ENCODE measurements at regions of chr11 and their contacts with region 1.

Region 1: DNA sequence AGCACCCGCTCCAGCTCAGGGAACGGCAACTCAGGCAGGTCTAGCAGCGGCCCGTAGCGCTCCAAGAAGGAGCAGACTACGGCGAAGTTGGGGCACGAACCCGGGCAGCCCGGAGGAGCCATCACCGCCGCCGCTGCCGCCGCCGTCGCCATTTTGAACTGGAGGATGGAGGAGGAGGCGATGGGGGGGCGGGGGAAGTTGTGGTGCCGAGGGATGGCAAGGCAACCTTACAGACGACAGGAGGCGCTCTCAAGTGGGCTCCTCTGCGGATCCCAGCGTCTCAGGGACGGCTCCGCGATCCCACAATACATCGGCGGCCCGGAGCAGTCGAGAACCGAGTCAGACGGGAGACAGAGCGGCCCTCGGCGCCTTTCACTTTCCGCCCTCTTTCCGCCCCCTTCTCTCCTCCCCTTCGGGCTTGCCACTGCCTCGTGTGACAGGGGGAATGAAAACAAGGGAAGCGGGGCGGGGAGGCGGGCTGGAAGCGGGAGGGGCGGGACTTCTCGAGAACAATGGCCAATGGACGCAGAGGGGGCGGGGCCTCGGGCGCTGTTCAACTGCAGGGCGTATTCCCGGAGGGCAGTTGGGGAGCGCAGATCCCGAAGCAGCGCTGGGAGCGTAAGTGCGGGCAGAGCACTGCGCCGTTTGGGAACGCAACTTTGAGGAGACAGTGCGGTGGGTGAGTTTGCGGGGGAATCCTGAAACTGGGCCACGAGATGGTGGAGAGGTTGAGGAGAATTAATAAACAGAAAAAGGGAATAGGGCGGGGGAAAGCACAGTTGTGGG is at the starts of genes AAMDC and RSF1:
- DNase-seq: peak; percentile 99
- H3K4me3 ChIP-seq: peak within 1 kb of the TSS; percentile 95 to 99
- H3K27ac ChIP-seq: peak within 1 kb of the TSS; percentile 96 to 97
- H3K4me1 ChIP-seq: peaks cover 5% of the 10 kb centered on the region
- H3K27me3 ChIP-seq: no peaks in the 10 kb centered on the region
- CTCF ChIP-seq: peak; percentile 36 to 80 (median 72)
- POLR2A ChIP-seq: peak; percentile 97
- total RNA-seq, gene AAMDC: 27.0 to 27.5 TPM
- total RNA-seq, gene RSF1: 25.5 to 46.2 TPM

Region 2: DNA sequence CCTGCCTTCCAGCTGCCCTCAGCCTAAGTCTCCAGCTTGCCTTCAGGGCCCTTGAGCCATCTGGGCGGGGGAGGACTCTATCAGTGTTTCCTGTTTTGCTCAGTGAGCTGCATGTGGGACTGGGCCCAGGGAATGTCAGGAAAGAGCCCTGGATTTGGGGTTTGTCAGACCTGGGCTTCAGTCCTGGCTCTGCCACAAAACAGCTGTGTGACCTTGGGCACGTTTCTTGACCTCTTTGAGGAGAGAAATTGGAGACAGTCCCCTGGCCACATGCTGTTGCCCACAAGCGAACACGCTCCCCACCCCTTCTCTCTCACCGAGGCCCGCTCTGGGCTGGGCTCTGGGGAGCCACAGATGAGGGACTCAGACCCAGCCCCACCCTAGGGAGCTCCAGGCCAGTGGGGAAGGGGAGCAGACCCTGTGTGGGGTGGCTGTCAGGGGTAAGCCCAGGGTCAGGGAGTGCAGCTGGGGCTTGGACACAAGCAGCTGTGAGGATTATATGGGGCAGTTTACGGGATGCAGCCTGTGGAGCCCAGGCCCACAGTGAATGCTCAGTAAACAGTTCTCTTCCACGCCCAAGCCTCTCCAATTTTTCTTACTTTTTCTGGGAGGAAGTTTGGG is 680.4 kb before region 1 on chr11:
- intact Hi-C with region 1: no loop called
- DNase-seq: no peak
- H3K4me3 ChIP-seq: no peak overlapping the region
- H3K27ac ChIP-seq: no peak overlapping the region
- H3K4me1 ChIP-seq: no peaks in the 10 kb centered on the region
- H3K27me3 ChIP-seq: peaks cover 4% of the 10 kb centered on the region
- CTCF ChIP-seq: no peak
- POLR2A ChIP-seq: no peak

Region 3: DNA sequence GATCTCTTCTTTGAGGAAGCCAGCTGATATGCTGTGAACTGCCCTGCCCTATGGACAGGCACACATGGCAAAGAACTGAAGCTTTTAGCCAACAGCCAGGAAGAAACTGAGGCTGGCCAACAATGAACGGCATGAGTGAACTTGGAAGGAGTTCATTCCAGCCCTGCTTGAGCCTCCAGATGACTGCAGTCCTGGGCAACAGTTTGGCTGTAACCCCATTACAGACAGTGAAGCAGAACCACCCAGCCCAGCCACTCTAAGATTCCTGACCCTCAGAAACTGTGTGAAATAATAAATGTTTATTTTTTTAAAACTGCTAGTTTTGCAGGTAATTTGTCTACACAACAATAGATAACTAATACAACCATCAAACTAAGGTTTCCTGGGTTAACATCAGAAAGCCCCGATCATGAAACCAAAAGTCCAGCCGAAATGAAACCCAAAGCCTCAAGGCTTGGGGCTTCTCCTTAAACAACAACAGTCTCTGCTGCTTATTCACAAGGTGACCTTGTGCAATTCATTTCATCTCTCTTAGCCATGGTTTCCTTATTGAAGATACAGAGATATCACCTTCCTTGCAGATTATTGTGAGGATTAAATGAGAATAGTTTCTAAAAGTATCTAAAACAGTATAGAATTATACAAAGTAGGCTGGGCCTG is 378.2 kb before region 1 on chr11:
- intact Hi-C with region 1: no loop called
- DNase-seq: no peak
- H3K4me3 ChIP-seq: no peak overlapping the region
- H3K27ac ChIP-seq: no peak overlapping the region
- H3K4me1 ChIP-seq: no peaks in the 10 kb centered on the region
- H3K27me3 ChIP-seq: no peaks in the 10 kb centered on the region
- CTCF ChIP-seq: no peak
- POLR2A ChIP-seq: no peak

Region 4: GRCh38 chr11:77710358-77710757 is 110.4 kb before region 1 on chr11:
- intact Hi-C with region 1: no loop called
- DNase-seq: no peak
- H3K4me3 ChIP-seq: no peak overlapping the region
- H3K27ac ChIP-seq: no peak overlapping the region
- H3K4me1 ChIP-seq: no peaks in the 10 kb centered on the region
- H3K27me3 ChIP-seq: no peaks in the 10 kb centered on the region
- CTCF ChIP-seq: no peak
- POLR2A ChIP-seq: no peak

Region 5: GRCh38 chr11:77994412-77995362 is 173.9 kb after region 1 on chr11 and contains the start of gene INTS4:
- intact Hi-C with region 1: loop called (anchors 1 kb)
- DNase-seq: peak; percentile 99
- H3K4me3 ChIP-seq: peak within 1 kb of the TSS; percentile 47 to 55
- H3K27ac ChIP-seq: peak within 1 kb of the TSS; percentile 68 to 70
- H3K4me1 ChIP-seq: peaks cover 7% of the 10 kb centered on the region
- H3K27me3 ChIP-seq: no peaks in the 10 kb centered on the region
- CTCF ChIP-seq: peak in 1 of 4 experiments; percentile 11
- POLR2A ChIP-seq: peak; percentile 30
- total RNA-seq, gene INTS4: 30.1 to 31.0 TPM

Region 6: GRCh38 chr11:78045851-78046485 is 225.2 kb after region 1 on chr11:
- intact Hi-C with region 1: loop called (anchors 5 kb)
- DNase-seq: peak; percentile 70
- H3K4me3 ChIP-seq: peak overlapping the region; percentile 28 to 30
- H3K27ac ChIP-seq: peak overlapping the region; percentile 21 to 64
- H3K4me1 ChIP-seq: no peaks in the 10 kb centered on the region
- H3K27me3 ChIP-seq: no peaks in the 10 kb centered on the region
- CTCF ChIP-seq: peak; percentile 89 to 97 (median 96)
- POLR2A ChIP-seq: no peak

Region 7: GRCh38 chr11:78057462-78058055 is 236.8 kb after region 1 on chr11:
- intact Hi-C with region 1: no loop called
- DNase-seq: no peak
- H3K4me3 ChIP-seq: no peak overlapping the region
- H3K27ac ChIP-seq: no peak overlapping the region
- H3K4me1 ChIP-seq: no peaks in the 10 kb centered on the region
- H3K27me3 ChIP-seq: no peaks in the 10 kb centered on the region
- CTCF ChIP-seq: no peak
- POLR2A ChIP-seq: no peak

Region 8: GRCh38 chr11:78574386-78575381 is 753.9 kb after region 1 on chr11 and contains the start of gene NARS2:
- intact Hi-C with region 1: loop called (anchors 10 kb)
- DNase-seq: peak; percentile 97
- H3K4me3 ChIP-seq: peak within 1 kb of the TSS; percentile 63 to 74
- H3K27ac ChIP-seq: peak within 1 kb of the TSS; percentile 83 to 88
- H3K4me1 ChIP-seq: no peaks in the 10 kb centered on the region
- H3K27me3 ChIP-seq: no peaks in the 10 kb centered on the region
- CTCF ChIP-seq: no peak
- POLR2A ChIP-seq: peak; percentile 88
- total RNA-seq, gene NARS2: 21.8 to 25.2 TPM

Measured in prostate gland (tissue), 2 donors.